Posterior cingulate gyrus (tissue), 11 donors: ENCODE measurements at regions of chr2 and their contacts with region 1.

Region 1: DNA sequence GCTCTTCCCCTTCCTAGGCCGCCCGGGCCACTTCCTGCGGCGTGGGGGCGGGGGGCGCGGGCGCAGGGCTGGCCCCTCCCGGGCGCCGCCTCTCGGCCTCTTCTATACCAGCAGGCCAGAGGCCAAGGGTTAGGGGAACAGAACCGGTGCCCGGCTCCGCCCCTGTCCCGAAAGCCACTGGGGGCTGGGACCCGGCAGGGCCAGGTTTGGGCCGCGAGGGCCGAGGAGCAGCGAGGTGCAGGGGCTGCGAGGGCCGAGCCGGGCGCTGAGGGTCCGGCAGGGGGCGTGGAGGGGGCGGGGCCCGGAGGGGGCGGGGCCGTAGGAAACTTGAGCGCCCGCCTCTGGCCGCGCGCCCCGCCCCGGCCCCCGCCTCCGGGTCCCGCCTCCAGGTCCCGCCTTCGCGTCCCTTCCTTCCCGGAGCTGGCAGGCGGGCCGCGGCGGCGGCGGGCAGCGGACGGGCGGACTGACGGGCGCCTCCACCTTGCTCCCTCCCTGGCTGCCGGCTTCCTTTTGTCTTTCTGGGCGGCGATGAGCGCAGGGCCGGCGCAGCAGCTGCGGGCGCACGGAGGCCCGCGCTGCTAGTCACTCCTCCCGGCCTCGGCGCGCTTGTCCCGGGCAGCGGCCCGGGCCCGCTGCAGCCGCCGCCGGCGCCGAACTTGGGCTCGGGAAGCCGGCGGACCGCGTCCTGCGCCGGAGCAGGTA is at the start of gene HPCAL1:
- DNase-seq: peak; percentile 70 to 98 (median 80)

Region 2: DNA sequence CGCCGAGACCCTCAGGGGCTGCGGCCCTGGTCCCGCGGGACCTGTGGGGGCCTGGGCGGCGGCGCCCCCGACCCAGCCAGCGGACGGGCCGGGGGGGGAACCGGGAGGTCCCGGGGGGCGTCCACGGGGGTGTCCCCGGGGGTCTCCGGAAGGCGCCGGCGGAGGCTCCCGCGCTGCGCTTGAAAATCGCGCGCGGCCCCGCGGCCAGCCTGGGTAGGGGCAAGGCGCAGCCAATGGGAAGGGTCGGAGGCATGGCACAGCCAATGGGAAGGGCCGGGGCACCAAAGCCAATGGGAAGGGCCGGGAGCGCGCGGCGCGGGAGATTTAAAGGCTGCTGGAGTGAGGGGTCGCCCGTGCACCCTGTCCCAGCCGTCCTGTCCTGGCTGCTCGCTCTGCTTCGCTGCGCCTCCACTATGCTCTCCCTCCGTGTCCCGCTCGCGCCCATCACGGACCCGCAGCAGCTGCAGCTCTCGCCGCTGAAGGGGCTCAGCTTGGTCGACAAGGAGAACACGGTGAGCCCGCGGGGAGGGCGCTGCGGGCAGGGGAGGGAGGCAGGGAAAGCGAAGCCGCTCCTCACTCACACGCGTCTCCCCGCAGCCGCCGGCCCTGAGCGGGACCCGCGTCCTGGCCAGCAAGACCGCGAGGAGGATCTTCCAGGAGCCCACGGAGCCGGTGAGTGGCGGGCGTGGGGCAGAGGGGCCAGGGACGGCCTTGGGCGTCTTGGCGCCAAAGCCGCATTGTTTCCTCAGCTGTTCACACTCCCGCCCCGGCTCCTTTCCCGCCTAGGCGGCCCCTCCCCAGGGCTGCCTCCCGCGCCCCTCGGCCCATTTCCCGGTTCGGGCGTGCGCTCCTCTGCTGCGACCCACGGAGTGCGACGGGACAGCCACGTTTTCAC is 180.0 kb before region 1 on chr2 and contains the start of gene RRM2:
- intact Hi-C with region 1: loop called (anchors 10 kb)
- DNase-seq: peak; percentile 82 to 99 (median 92)

Region 3: DNA sequence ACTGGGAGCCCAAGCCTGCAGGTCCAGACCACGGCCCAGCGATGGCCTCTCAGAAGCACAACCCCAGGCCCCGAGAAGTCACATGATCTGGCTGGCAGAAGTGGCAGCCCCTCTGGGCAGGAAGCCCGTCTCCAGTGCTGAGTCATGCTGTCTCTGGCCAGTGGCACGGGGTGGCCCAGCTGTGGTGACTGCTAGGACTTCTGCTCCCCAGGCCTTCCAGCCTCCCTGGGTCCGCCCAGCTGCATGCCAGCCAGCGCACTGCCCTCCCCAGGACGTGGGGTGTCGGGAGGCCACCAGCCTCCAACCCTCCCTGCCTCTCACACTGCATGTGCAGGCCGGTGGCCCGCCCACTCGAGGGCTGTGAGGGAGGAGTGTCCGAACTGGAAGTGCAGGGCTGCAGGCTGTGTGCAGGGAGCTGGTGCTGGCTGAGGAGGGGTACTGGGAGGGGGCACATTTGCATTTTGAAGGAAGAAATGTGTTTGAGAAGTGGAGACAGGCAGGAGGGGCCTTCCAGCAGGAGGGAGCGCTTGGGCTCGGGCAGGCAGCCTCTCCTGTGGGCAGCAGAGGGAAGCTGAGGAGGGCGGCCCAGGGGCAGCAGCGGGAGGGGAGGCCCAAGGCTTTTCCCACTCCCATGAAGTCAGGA is 17.0 kb before region 1 on chr2:
- intact Hi-C with region 1: loop called (anchors 2 kb)
- DNase-seq: peak; percentile 75 to 98 (median 88)

Region 4: GRCh38 chr2:10408649-10409579 is 106.3 kb after region 1 on chr2:
- intact Hi-C with region 1: loop called (anchors 5 kb)
- DNase-seq: peak; percentile 47 to 96 (median 75)